PC-3 (cell line): ENCODE measurements at regions of chr11 and their contacts with region 1.

Region 1: GRCh38 chr11:103055221-103055890 is 36.6 kb downstream of the DCUN1D5 start:
- DNase-seq: peak; percentile 71
- ATAC-seq: peak; percentile 25; the same call in 1 of the 2 replicates
- H3K4me3 ChIP-seq: no peak overlapping the region
- H3K27ac ChIP-seq: no peak overlapping the region
- H3K4me1 ChIP-seq: peaks cover 19% of the 10 kb centered on the region
- H3K27me3 ChIP-seq: no peaks in the 10 kb centered on the region
- CTCF ChIP-seq: peak; percentile 91

Region 2: GRCh38 chr11:102733232-102733875 is 322.0 kb before region 1 on chr11:
- CTCF ChIA-PET with region 1: no interaction called
- POLR2A ChIA-PET with region 1: no interaction called
- intact Hi-C with region 1: loop called (anchors 1 kb)
- DNase-seq: peak; percentile 91
- ATAC-seq: peak; percentile 99
- H3K4me3 ChIP-seq: no peak overlapping the region
- H3K27ac ChIP-seq: no peak overlapping the region
- H3K4me1 ChIP-seq: no peaks in the 10 kb centered on the region
- H3K27me3 ChIP-seq: no peaks in the 10 kb centered on the region
- CTCF ChIP-seq: peak; percentile 99

Region 3: GRCh38 chr11:102810945-102811660 is 244.3 kb before region 1 on chr11:
- CTCF ChIA-PET with region 1: no interaction called
- POLR2A ChIA-PET with region 1: no interaction called
- intact Hi-C with region 1: loop called (anchors 1 kb)
- DNase-seq: peak; percentile 69
- ATAC-seq: peak; percentile 86
- H3K4me3 ChIP-seq: no peak overlapping the region
- H3K27ac ChIP-seq: no peak overlapping the region
- H3K4me1 ChIP-seq: 0 out of 2 replicates have a peak, but pooled peaks cover 5% of the 10 kb centered on the region
- H3K27me3 ChIP-seq: no peaks in the 10 kb centered on the region
- CTCF ChIP-seq: peak; percentile 88

Region 4: DNA sequence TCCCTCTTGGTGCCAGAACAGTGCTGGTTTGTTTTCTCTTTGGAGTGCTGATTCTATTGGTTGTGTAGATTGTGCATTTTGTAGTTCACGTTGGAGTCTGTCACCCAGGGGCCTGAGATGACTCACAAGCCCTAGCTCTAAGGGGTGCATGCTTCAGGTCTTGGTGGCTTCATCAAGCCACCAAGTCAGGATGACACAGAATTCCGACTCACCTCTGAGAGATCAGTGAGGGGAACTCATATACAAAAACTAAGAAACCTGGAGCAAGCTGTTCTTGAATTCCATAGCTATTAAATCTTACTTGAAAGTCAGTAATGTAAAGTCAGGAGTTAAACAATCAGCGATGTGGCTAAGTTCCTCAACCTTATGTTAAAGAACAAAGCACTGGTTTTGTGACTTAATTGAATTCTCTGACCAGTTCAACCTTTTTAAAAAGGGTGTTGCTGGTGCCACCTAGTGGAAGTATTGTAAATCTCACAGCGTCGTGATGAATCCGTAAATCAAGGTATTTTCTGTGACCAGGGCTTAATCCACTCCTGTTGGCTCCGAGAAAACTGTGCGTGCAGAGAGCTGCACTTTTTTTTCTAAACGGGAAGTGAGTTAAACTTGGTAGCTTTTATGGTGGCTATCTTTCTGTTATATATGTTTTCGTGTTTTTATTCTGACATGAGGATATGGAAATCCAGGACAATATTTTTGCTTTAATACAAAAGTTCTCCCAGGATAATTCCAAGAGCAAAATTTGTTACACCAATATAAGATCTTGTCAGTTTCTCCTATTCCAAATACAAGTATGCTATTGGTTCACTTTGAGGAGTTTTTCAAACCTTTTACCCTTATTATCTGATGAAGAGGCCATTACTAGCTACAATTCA is 114.4 kb before region 1 on chr11:
- CTCF ChIA-PET with region 1: no interaction called
- POLR2A ChIA-PET with region 1: no interaction called
- intact Hi-C with region 1: loop called (anchors 1 kb)
- DNase-seq: peak; percentile 96
- ATAC-seq: peak; percentile 93
- H3K4me3 ChIP-seq: no peak overlapping the region
- H3K27ac ChIP-seq: no peak overlapping the region
- H3K4me1 ChIP-seq: peaks cover 14% of the 10 kb centered on the region; the same call in 1 of the 2 replicates
- H3K27me3 ChIP-seq: no peaks in the 10 kb centered on the region
- CTCF ChIP-seq: peak; percentile 95

Region 5: DNA sequence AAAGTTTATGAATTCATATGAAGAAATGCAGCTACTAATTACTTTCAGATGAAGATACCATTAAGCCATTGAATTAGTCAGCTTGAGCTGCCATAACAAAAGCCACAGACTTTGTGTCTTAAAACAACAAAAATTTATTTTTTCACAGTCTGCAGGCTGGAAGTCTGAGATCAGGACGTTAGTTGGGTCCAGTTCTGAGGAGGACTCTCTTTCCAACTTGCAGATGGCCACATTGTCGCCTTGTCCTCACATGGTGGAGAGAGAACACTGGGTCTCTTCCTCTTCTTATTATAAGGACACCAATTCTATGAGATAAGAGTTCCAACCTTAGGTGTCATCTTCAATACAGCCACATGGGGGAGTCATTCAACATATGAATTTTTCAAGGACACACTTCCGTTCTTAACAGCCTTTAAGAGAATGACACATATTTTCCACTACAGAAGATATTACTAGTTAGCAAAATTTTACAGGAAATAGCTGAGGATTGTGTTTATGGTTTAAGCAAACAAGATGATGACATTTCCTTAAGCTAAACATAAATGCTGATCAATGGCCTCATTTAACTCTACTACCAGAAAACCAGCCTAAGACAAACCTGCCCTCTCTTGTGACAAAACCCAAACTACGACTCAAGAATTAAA is 19.4 kb before region 1 on chr11:
- CTCF ChIA-PET with region 1: no interaction called
- POLR2A ChIA-PET with region 1: no interaction called
- intact Hi-C with region 1: loop called (anchors 1 kb)
- DNase-seq: peak; percentile 96
- ATAC-seq: peak; percentile 90
- H3K4me3 ChIP-seq: no peak overlapping the region
- H3K27ac ChIP-seq: peak overlapping the region; percentile 31
- H3K4me1 ChIP-seq: peaks cover 8% of the 10 kb centered on the region
- H3K27me3 ChIP-seq: no peaks in the 10 kb centered on the region
- CTCF ChIP-seq: peak; percentile 89

Region 6: GRCh38 chr11:103125462-103125861 is 70.1 kb after region 1 on chr11:
- CTCF ChIA-PET with region 1: no interaction called
- POLR2A ChIA-PET with region 1: no interaction called
- intact Hi-C with region 1: no loop called
- DNase-seq: no peak
- ATAC-seq: no peak
- H3K4me3 ChIP-seq: no peak overlapping the region
- H3K27ac ChIP-seq: no peak overlapping the region
- H3K4me1 ChIP-seq: no peaks in the 10 kb centered on the region
- H3K27me3 ChIP-seq: no peaks in the 10 kb centered on the region
- CTCF ChIP-seq: no peak